ENCODE measurements at regions of chrX and their contacts with region 1.

Region 1: GRCh38 chrX:120213436-120214265 is 37.0 kb upstream of the ZBTB33 start:
- DNase-seq: peak; percentile 36
- ATAC-seq: peak; percentile 99
- H3K4me3 ChIP-seq: no peak overlapping the region
- H3K27ac ChIP-seq: no peak overlapping the region
- H3K4me1 ChIP-seq: no peaks in the 10 kb centered on the region
- H3K27me3 ChIP-seq: no peaks in the 10 kb centered on the region
- CTCF ChIP-seq: peak; percentile 81 to 94 (median 87)
- EP300 ChIP-seq: no peak
- POLR2A ChIP-seq: no peak
- RAD21 ChIP-seq: peak; percentile 78

Region 2: GRCh38 chrX:119981286-119982070 is 232.2 kb before region 1 on chrX:
- CTCF ChIA-PET with region 1: interaction called, 34 read pairs
- POLR2A ChIA-PET with region 1: no interaction called
- RAD21 ChIA-PET with region 1: interaction called, 10 read pairs
- SMC1A ChIA-PET with region 1: interaction called, 13 read pairs
- in situ Hi-C with region 1: no loop called
- intact Hi-C with region 1: no loop called
- DNase-seq: no peak
- ATAC-seq: peak; percentile 90
- H3K4me3 ChIP-seq: no peak overlapping the region
- H3K27ac ChIP-seq: no peak overlapping the region
- H3K4me1 ChIP-seq: no peaks in the 10 kb centered on the region
- H3K27me3 ChIP-seq: no peaks in the 10 kb centered on the region; a peak in 1 of 4 replicates
- CTCF ChIP-seq: peak; percentile 61 to 67 (median 62)
- EP300 ChIP-seq: no peak
- POLR2A ChIP-seq: no peak
- RAD21 ChIP-seq: peak; percentile 61

Region 3: GRCh38 chrX:120120223-120120622 is 93.4 kb before region 1 on chrX:
- CTCF ChIA-PET with region 1: interaction called, 4 read pairs
- POLR2A ChIA-PET with region 1: no interaction called
- RAD21 ChIA-PET with region 1: no interaction called
- SMC1A ChIA-PET with region 1: no interaction called
- in situ Hi-C with region 1: loop called (anchors 25 kb)
- intact Hi-C with region 1: no loop called
- DNase-seq: no peak
- ATAC-seq: no peak
- H3K4me3 ChIP-seq: no peak overlapping the region
- H3K27ac ChIP-seq: no peak overlapping the region
- H3K4me1 ChIP-seq: no peaks in the 10 kb centered on the region
- H3K27me3 ChIP-seq: no peaks in the 10 kb centered on the region
- CTCF ChIP-seq: no peak
- EP300 ChIP-seq: no peak
- POLR2A ChIP-seq: no peak
- RAD21 ChIP-seq: no peak

Region 4: GRCh38 chrX:120228187-120228908 is 14.7 kb after region 1 on chrX:
- CTCF ChIA-PET with region 1: interaction called, 51 read pairs
- POLR2A ChIA-PET with region 1: no interaction called
- RAD21 ChIA-PET with region 1: no interaction called
- SMC1A ChIA-PET with region 1: interaction called, 12 read pairs
- in situ Hi-C with region 1: no loop called
- intact Hi-C with region 1: no loop called
- DNase-seq: no peak
- ATAC-seq: no peak
- H3K4me3 ChIP-seq: no peak overlapping the region
- H3K27ac ChIP-seq: no peak overlapping the region
- H3K4me1 ChIP-seq: no peaks in the 10 kb centered on the region
- H3K27me3 ChIP-seq: no peaks in the 10 kb centered on the region
- CTCF ChIP-seq: no peak
- EP300 ChIP-seq: no peak
- POLR2A ChIP-seq: no peak
- RAD21 ChIP-seq: no peak

Region 5: DNA sequence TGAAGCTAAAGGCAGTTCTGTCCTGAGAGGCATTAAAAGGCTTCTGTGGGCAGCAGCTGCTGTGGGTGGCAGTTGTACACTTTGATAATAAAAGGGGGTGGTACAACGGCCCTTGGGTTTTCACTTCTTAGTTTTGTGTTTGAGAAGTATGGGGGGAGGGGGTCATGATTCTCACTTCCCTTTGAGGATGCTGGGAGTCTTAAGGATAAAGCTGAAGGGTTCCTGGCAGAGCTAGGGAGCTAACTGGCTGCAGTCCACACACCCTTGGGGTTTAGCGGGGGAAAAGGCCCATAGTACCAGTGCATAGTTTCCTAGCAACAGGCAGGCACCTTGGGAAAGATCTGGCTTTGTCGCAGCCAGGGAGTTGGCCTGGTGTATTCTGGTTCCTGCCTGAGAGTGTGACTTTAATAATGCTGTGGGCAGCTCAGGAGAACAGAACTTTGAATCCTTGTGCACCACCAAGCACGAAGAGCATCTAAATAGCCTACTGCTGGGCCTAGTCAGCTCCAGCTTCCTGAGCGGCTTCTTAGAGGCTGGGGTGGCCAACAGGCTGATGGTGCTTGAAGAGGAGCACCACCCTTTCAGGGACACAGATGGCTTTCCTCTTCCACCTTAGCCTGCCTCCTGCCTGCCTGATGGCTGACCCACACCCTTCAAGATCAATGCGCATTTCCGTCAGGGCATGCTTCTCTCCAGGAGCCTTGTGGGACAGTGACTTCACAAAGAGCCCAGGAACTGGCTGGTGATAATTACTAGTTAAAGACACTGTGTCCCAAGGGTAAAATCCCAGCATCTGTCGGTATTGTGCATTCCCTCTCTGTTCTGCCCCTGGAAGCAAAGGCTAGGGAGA is 49.4 kb after region 1 on chrX:
- CTCF ChIA-PET with region 1: interaction called, 10 read pairs
- POLR2A ChIA-PET with region 1: no interaction called
- RAD21 ChIA-PET with region 1: no interaction called
- SMC1A ChIA-PET with region 1: no interaction called
- in situ Hi-C with region 1: no loop called
- intact Hi-C with region 1: no loop called
- DNase-seq: no peak
- ATAC-seq: peak; percentile 85
- H3K4me3 ChIP-seq: no peak overlapping the region
- H3K27ac ChIP-seq: peak overlapping the region; percentile 32; the same call in 1 of the 2 replicates
- H3K4me1 ChIP-seq: peaks cover 8% of the 10 kb centered on the region
- H3K27me3 ChIP-seq: no peaks in the 10 kb centered on the region
- CTCF ChIP-seq: no peak
- EP300 ChIP-seq: peak; percentile 22 to 35; a peak in 1 of 4 replicates
- POLR2A ChIP-seq: no peak
- RAD21 ChIP-seq: no peak

Region 6: DNA sequence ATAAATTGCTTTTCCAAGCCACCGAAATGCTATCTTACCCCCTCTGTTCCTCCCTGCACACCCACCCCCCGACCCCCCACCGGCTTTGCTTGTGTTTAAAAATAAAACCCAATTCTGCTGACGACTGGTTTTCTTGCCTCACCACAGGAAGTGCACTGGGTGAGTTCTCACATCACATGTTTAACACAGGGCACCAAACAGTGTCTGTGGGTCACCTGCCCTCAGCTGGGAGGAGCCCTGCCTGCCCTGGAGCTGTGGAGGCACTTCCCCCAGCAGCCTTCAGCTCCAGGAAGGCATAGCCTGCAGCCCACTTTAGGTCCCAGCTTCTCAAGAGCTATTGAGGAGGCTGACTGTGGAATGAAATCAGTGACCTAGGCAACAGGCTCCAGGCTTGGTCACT is 88.8 kb after region 1 on chrX:
- CTCF ChIA-PET with region 1: interaction called, 29 read pairs
- POLR2A ChIA-PET with region 1: no interaction called
- RAD21 ChIA-PET with region 1: interaction called, 8 read pairs
- SMC1A ChIA-PET with region 1: interaction called, 7 read pairs
- in situ Hi-C with region 1: no loop called
- intact Hi-C with region 1: no loop called
- DNase-seq: peak; percentile 61
- ATAC-seq: peak; percentile 96
- H3K4me3 ChIP-seq: peak overlapping the region; percentile 30; the same call in 1 of the 2 replicates
- H3K27ac ChIP-seq: peak overlapping the region; percentile 62
- H3K4me1 ChIP-seq: peaks cover 13% of the 10 kb centered on the region
- H3K27me3 ChIP-seq: no peaks in the 10 kb centered on the region
- CTCF ChIP-seq: no peak
- EP300 ChIP-seq: 0 out of 4 replicates have a peak, but pooled peaks of 1 of the 2 experiments have one; percentile 29
- POLR2A ChIP-seq: 0 out of 2 replicates have a peak, but pooled peaks have one; percentile 32
- RAD21 ChIP-seq: no peak

Region 7: DNA sequence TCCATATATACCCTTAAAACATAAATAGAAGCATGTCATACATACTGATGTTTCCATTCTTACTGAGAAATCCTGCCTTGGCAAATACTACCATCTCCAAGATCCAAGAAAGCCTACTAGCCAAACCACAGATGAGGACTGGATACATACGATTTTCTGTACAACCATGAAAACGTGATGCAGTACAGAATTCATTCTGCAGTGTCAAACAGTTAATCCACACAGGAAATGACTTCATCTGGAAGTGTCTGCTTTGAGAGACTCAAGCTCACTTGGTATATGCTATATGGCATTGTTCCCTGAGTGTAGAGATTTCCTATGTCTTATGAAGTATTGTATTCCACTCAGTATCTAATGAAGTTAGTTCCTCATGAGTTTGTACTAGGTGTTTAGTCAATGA is 567.8 kb after region 1 on chrX:
- CTCF ChIA-PET with region 1: no interaction called
- POLR2A ChIA-PET with region 1: no interaction called
- RAD21 ChIA-PET with region 1: no interaction called
- SMC1A ChIA-PET with region 1: no interaction called
- in situ Hi-C with region 1: no loop called
- intact Hi-C with region 1: no loop called
- DNase-seq: no peak
- ATAC-seq: no peak
- H3K4me3 ChIP-seq: no peak overlapping the region
- H3K27ac ChIP-seq: no peak overlapping the region
- H3K4me1 ChIP-seq: no peaks in the 10 kb centered on the region
- H3K27me3 ChIP-seq: no peaks in the 10 kb centered on the region; a peak in 1 of 4 replicates
- CTCF ChIP-seq: no peak
- EP300 ChIP-seq: no peak
- POLR2A ChIP-seq: no peak
- RAD21 ChIP-seq: no peak

Measured in GM12878 (cell line).